SK-N-SH (cell line): ENCODE measurements at regions of chr1 and their contacts with region 1.

Region 1: DNA sequence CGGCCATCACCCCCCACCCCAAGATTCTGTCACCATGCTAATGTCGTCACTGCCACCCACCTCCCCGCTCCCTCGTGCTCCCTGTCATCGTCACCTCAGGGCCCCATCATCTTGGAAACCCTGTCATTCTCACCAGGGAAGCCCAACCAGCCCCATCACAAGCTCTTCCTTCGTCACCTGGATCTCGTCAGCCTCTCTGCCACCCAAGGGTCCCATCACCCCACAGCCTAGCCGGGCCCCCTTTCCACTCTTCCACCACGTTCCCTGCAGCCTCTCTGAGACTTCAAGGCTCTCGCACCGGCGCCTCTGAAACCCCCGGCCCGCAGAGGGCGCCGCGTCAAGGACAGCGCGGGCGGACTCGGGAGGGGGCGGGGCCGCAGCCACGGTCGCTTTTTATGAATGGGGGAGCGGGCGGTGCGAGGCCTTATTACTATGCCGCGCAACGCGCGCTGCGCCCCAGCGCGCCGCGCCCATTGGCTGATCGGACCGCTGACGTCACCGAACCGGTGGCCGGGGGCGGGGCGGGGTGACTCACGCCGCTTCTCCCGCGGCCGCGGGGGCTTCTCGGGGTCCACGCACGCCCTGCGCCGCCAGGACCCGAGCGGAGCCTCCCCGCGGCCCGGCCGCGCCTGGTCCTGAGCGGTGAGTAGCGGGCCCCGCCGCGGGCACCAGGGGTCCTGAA is at the start of gene GPR3:
- DNase-seq: peak; percentile 99
- H3K4me3 ChIP-seq: peak within 1 kb of the TSS; percentile 71 to 94
- H3K27ac ChIP-seq: peak within 1 kb of the TSS; percentile 34 to 60; a peak in 2 of 4 replicates
- H3K4me1 ChIP-seq: peaks cover 0 to 28% of the 10 kb centered on the region in 2 experiments; a peak in 2 of 4 replicates
- H3K27me3 ChIP-seq: no peaks in the 10 kb centered on the region; the same call in 1 of the 2 replicates
- CTCF ChIP-seq: peak; percentile 64
- EP300 ChIP-seq: no peak
- RAD21 ChIP-seq: peak; percentile 45
- polyA plus RNA-seq, gene GPR3: 5.8 and 6.0 TPM in 2 replicates

Region 2: DNA sequence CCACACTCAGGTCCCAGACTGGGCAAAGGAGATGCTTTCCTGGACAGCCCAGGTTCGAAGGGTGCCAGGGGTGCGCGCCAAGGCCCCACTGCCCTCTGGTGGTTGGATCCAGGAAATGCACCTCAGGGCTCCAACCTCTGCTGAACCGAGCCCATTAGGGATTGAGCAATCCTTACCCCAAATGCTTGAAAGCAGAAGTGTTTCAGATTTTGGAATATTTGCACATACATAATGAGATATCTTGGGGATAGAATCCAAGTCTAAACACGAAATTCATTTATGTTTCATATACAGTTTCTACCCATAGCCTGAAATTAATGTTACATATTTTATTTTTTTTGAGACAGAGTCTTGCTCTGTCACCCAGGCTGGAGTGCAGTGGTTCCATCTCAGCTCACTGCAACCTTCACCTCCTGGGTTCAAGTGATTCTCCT is 294.7 kb before region 1 on chr1:
- CTCF ChIA-PET with region 1: interaction called, 11 read pairs
- POLR2A ChIA-PET with region 1: no interaction called
- DNase-seq: peak; percentile 91
- H3K4me3 ChIP-seq: peak overlapping the region in 1 of 2 experiments; percentile 36; a peak in 1 of 4 replicates
- H3K27ac ChIP-seq: no peak overlapping the region
- H3K4me1 ChIP-seq: peaks cover 15 to 19% of the 10 kb centered on the region in 2 experiments; a peak in 3 of 4 replicates
- H3K27me3 ChIP-seq: no peaks in the 10 kb centered on the region
- CTCF ChIP-seq: peak; percentile 97
- EP300 ChIP-seq: no peak
- RAD21 ChIP-seq: peak; percentile 96

Region 3: DNA sequence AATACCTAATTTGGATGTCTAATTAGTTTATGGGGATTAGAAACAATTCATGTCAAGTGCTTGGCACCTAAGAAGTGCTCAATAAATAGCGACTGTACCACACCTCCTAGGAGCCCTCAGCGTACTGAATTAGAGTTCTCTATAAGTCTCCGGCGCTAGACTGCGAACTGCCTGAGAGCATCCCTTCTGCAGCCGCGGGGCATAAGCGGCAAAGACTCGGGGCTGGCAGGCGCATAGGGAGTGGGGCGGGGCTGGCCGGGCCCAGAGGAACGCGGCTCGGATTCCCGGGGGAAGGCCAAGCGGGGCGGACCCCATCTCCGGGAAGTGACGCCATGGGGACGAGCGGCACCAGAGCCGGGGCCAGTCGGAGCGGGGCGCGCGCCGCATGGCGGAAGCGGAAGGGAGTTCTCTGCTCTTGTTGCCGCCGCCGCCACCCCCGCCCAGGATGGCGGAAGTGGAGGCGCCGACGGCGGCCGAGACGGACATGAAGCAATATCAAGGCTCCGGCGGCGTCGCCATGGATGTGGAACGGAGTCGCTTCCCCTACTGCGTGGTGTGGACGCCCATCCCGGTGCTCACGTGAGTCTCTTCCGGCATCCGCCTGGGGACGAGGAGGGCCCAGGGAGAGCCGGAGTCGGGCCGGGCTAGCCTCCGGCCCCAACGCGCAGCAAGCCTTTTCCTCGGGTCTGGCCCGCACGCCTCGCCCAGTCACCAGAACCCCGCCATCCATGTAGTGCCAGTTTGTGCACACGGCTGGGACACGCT is 70.2 kb before region 1 on chr1 and contains the start of gene TMEM222:
- CTCF ChIA-PET with region 1: interaction called, 15 read pairs
- POLR2A ChIA-PET with region 1: no interaction called
- DNase-seq: peak; percentile 98
- H3K4me3 ChIP-seq: peak within 1 kb of the TSS; percentile 95 to 100
- H3K27ac ChIP-seq: peak within 1 kb of the TSS; percentile 79 to 92
- H3K4me1 ChIP-seq: peaks cover 11 to 24% of the 10 kb centered on the region in 2 experiments; a peak in 3 of 4 replicates
- H3K27me3 ChIP-seq: no peaks in the 10 kb centered on the region
- CTCF ChIP-seq: no peak
- EP300 ChIP-seq: peak; percentile 20 to 57; a peak in 2 of 4 replicates
- RAD21 ChIP-seq: no peak
- polyA plus RNA-seq, gene TMEM222: 51.7 and 52.0 TPM in 2 replicates

Region 4: GRCh38 chr1:27332536-27333281 is 59.5 kb before region 1 on chr1:
- CTCF ChIA-PET with region 1: interaction called, 20 read pairs
- POLR2A ChIA-PET with region 1: no interaction called
- DNase-seq: peak; percentile 87
- H3K4me3 ChIP-seq: no peak overlapping the region; a peak in 1 of 4 replicates
- H3K27ac ChIP-seq: no peak overlapping the region
- H3K4me1 ChIP-seq: no peaks in the 10 kb centered on the region
- H3K27me3 ChIP-seq: no peaks in the 10 kb centered on the region
- CTCF ChIP-seq: peak; percentile 85
- EP300 ChIP-seq: no peak
- RAD21 ChIP-seq: peak; percentile 48

Region 5: GRCh38 chr1:27365372-27366112 is 26.7 kb before region 1 on chr1:
- CTCF ChIA-PET with region 1: interaction called, 154 read pairs
- POLR2A ChIA-PET with region 1: interaction called, 10 read pairs
- DNase-seq: peak; percentile 97
- H3K4me3 ChIP-seq: peak overlapping the region; percentile 69 to 89
- H3K27ac ChIP-seq: peak overlapping the region; percentile 84 to 94
- H3K4me1 ChIP-seq: peaks cover 4 to 14% of the 10 kb centered on the region in 2 experiments; a peak in 2 of 4 replicates
- H3K27me3 ChIP-seq: no peaks in the 10 kb centered on the region
- CTCF ChIP-seq: no peak
- EP300 ChIP-seq: peak in 1 of 2 experiments; percentile 66; a peak in 3 of 4 replicates
- RAD21 ChIP-seq: no peak

Region 6: DNA sequence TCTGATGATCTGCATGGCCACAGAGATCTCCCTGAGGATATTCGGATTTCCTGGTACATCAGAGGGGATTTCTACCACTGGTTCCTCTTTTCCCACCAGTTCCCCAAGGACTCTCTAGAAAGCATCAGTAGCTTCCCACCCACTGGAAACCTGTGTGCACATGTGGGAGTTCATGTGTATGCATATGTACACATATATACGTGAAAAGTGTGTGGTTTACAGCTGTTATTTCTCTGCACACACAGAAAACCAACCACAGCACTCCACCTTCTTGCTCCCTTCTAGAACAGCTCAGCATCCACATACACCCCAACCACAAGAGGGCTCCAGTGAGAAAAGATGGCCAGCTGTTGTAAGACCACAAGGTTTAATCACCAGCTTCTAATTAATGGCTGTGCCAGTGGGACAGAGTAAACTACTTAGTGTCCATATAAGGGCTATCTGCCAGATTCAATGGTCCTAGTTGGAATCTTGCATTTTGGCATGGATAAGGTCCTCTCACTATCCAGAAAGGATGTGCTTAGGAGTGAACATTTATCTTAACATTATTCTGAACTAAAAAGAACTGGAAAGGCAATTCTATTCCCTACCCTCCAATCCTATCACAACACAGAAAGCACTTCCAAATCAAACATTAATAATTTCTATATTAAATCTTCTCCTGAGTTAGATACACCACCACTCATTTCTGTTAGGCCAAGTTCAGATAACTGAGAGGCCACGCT is 24.3 kb after region 1 on chr1:
- CTCF ChIA-PET with region 1: interaction called, 20 read pairs
- POLR2A ChIA-PET with region 1: no interaction called
- DNase-seq: peak; percentile 45
- H3K4me3 ChIP-seq: no peak overlapping the region
- H3K27ac ChIP-seq: no peak overlapping the region
- H3K4me1 ChIP-seq: peaks cover 0 to 14% of the 10 kb centered on the region in 2 experiments; a peak in 1 of 4 replicates
- H3K27me3 ChIP-seq: no peaks in the 10 kb centered on the region
- CTCF ChIP-seq: peak; percentile 58
- EP300 ChIP-seq: no peak
- RAD21 ChIP-seq: peak; percentile 56

Region 7: GRCh38 chr1:27662707-27663393 is 270.6 kb after region 1 on chr1:
- CTCF ChIA-PET with region 1: interaction called, 10 read pairs
- POLR2A ChIA-PET with region 1: no interaction called
- DNase-seq: peak; percentile 86
- H3K4me3 ChIP-seq: no peak overlapping the region; a peak in 1 of 4 replicates
- H3K27ac ChIP-seq: peak overlapping the region in 1 of 2 experiments; percentile 2; a peak in 1 of 4 replicates
- H3K4me1 ChIP-seq: peaks cover 6 to 9% of the 10 kb centered on the region in 2 experiments; a peak in 2 of 4 replicates
- H3K27me3 ChIP-seq: no peaks in the 10 kb centered on the region
- CTCF ChIP-seq: peak; percentile 90
- EP300 ChIP-seq: no peak
- RAD21 ChIP-seq: peak; percentile 91